Activated B cell treated with CpG ODN at 0.5 μM for 24 hours (primary cell): ENCODE measurements at regions of chrX and their contacts with region 1.

Region 1: DNA sequence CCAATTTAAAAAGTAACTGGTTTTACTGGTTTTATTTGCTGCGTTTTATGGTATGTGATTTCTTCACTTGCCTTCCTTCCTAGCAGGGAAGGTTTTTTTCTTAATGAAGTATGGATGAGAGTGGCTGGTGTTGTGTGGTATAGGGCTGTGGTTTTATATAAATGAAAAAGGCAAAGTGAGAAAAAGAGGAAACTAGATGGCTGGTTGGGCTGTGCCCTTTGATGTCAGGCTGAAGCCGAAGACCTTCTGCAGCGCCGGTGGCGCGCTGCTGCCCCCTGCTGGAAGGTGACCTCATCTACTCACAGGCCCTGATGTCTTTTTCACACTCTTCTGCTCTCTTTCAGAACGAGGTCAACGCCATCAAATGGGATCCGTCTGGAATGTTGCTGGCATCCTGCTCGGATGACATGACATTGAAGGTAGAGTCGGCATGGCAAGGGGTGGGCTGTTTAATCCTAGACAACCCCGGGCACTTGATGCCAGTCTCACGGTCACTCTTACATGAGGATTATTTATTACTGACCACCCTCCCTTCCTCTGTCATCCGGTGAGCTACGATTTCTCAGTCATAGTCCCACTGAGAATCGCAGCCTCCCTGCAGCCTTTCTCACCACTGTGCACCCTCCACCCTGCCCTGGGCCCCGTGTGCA is 56.6 kb downstream of the GPR143 start:
- DNase-seq: peak; percentile 67
- ATAC-seq: peak; percentile 85
- H3K4me3 Mint-ChIP-seq: no peak overlapping the region
- H3K27ac Mint-ChIP-seq: no peak overlapping the region
- H3K4me1 Mint-ChIP-seq: peaks cover 12% of the 10 kb centered on the region
- H3K27me3 Mint-ChIP-seq: no peaks in the 10 kb centered on the region
- CTCF ChIP-seq: no peak

Region 2: DNA sequence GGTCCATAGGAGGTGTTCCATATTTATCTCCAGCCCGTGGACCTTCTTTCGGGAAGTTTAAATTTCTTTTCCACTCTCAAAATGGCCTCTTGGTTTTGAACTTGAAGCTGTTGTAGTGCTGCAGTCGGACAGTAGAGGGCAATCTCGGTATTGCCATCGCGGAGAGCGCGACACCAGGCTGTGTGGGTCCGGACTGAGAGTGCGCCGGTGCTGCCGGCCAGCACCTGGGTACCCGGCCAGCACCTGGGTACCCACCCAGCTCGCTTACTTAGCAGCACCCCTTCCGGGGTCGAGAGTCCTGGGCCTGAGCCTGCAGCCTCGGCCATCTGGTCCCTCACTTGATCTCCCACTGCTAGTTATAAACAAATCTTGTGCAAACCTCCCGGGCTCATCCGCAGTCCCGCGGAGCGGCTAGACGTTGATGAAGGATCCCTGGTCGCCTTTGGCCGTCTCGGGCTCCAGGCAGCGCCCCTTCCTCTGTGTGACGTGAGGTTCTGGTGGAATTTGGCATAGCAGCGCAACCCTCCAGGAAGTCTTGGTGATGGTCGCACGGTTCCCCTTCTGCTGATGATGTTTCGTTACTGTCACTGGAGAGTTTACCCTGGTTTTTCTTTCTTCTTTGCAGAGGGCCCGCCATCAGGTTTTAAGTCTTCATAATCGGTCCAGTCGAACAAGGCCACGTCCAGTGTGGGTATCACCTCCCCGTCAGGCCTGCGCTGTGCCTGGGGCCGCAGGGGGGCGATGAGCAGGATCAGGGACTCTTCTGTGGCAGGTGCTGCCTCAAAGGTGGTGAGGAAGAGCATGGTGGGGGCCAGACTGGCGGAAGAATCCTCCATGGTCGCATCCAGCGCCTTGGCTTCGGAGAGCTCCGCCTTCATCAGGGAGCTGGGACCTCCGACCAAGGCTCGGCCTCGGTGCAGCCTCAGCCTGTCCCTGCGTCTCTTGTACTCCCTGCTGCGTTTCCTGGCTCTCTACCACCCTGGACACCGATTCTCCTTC is 925.6 kb before region 1 on chrX:
- CTCF ChIA-PET with region 1: no interaction called
- POLR2A ChIA-PET with region 1: no interaction called
- intact Hi-C with region 1: loop called (anchors 1 kb)
- DNase-seq: no peak
- ATAC-seq: peak; percentile 65
- H3K4me3 Mint-ChIP-seq: no peak overlapping the region
- H3K27ac Mint-ChIP-seq: no peak overlapping the region
- H3K4me1 Mint-ChIP-seq: no peaks in the 10 kb centered on the region
- H3K27me3 Mint-ChIP-seq: no peaks in the 10 kb centered on the region
- CTCF ChIP-seq: no peak

Region 3: DNA sequence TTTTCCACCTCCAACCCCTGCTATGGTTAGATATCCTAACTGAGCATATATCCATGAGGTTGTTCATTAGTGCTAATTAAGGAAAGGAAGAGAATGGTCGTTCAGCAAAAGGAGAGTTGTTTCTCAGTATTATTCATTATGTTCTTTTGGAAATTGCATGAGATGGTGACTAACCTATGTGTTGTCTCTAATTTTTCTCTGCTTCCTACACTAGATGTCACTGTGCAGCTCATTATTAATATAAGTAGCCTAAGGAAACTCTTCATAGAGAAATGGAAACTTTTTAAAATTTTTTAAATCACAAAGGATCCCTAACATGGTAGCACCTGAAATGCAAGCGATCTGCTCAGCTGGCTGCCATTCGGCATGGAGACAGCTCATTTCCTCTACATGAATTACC is 840.1 kb before region 1 on chrX:
- CTCF ChIA-PET with region 1: no interaction called
- POLR2A ChIA-PET with region 1: no interaction called
- intact Hi-C with region 1: loop called (anchors 2 kb)
- DNase-seq: no peak
- ATAC-seq: no peak
- H3K4me3 Mint-ChIP-seq: no peak overlapping the region
- H3K27ac Mint-ChIP-seq: no peak overlapping the region
- H3K4me1 Mint-ChIP-seq: no peaks in the 10 kb centered on the region
- H3K27me3 Mint-ChIP-seq: peaks cover 6% of the 10 kb centered on the region
- CTCF ChIP-seq: no peak

Region 4: DNA sequence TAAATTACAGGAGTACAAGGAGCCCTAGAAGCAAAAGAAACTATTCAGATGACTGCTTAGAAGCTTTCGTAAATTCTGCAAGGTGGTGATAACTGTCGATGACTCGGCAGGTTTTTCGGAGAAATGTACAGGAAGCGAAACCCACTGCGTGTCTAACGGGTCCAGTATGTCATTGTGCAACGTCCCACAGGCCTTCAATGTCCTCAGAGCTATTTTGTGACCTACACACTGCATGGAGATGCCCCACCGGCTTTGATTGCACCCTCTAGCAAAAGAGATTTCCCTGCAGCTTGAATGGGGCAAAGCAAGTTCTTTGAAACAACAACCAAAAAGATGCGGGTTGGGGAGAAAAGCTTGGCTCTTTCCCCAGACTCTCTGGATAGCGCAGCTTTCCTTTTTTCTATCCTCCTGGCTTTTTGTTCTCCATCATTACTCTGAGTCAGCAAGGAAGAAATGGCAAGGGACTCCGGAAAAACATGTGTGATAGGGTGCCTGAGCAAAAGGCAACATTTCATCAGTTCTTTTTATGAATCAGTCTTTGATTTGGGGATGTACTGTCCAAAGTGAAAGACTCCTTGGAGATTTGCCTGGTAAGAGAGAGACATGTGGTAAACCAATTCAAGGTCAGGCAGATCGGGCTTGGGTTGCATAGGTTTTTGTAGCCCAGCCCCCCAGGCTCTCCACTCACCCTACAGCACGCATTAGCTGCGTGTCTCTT is 356.2 kb before region 1 on chrX:
- CTCF ChIA-PET with region 1: no interaction called
- POLR2A ChIA-PET with region 1: no interaction called
- intact Hi-C with region 1: loop called (anchors 1 kb)
- DNase-seq: no peak
- ATAC-seq: peak; percentile 71
- H3K4me3 Mint-ChIP-seq: peak overlapping the region; percentile 70
- H3K27ac Mint-ChIP-seq: peak overlapping the region; percentile 80
- H3K4me1 Mint-ChIP-seq: peaks cover 27% of the 10 kb centered on the region
- H3K27me3 Mint-ChIP-seq: no peaks in the 10 kb centered on the region
- CTCF ChIP-seq: no peak